Pancreas (tissue), 10 donors: ENCODE measurements at regions of chr2 and their contacts with region 1.

Region 1: GRCh38 chr2:96860065-96861043 is 2.5 kb upstream of the ANKRD39 start:
- DNase-seq: peak in 1 of 6 donors; percentile 58
- ATAC-seq: no peak
- H3K4me3 ChIP-seq: no peak overlapping the region
- H3K27ac ChIP-seq: no peak overlapping the region
- H3K4me1 ChIP-seq: peaks cover 0 to 5% (median 0%) of the 10 kb centered on the region in 3 donors
- H3K27me3 ChIP-seq: no peaks in the 10 kb centered on the region
- CTCF ChIP-seq: no peak

Region 2: GRCh38 chr2:96945012-96945804 is 84.9 kb after region 1 on chr2:
- intact Hi-C with region 1: loop called in 2 of 3 experiments (anchors 5 kb)
- DNase-seq: no peak
- ATAC-seq: no peak
- H3K4me3 ChIP-seq: no peak overlapping the region
- H3K27ac ChIP-seq: no peak overlapping the region
- H3K4me1 ChIP-seq: no peaks in the 10 kb centered on the region
- H3K27me3 ChIP-seq: no peaks in the 10 kb centered on the region
- CTCF ChIP-seq: no peak